HepG2 (cell line): ENCODE measurements at regions of chr4 and their contacts with region 1.

Region 1: GRCh38 chr4:1351854-1352633 is 5.0 kb downstream of the UVSSA start:
- DNase-seq: peak; percentile 52
- ATAC-seq: peak; percentile 60
- H3K4me3 ChIP-seq: no peak overlapping the region
- H3K27ac ChIP-seq: no peak overlapping the region
- H3K4me1 ChIP-seq: peaks cover 20% of the 10 kb centered on the region
- H3K27me3 ChIP-seq: no peaks in the 10 kb centered on the region; a peak in 1 of 5 replicates
- CTCF ChIP-seq: peak; percentile 97
- EP300 ChIP-seq: no peak
- POLR2A ChIP-seq: no peak
- RAD21 ChIP-seq: peak; percentile 73

Region 2: GRCh38 chr4:1130316-1131186 is 221.5 kb before region 1 on chr4:
- CTCF ChIA-PET with region 1: interaction called, 5 read pairs
- POLR2A ChIA-PET with region 1: no interaction called
- in situ Hi-C with region 1: loop called (anchors 5 kb)
- intact Hi-C with region 1: loop called (anchors 2 kb)
- DNase-seq: peak; percentile 56
- ATAC-seq: peak; percentile 97
- H3K4me3 ChIP-seq: no peak overlapping the region
- H3K27ac ChIP-seq: no peak overlapping the region
- H3K4me1 ChIP-seq: no peaks in the 10 kb centered on the region
- H3K27me3 ChIP-seq: peaks cover 1 to 9% of the 10 kb centered on the region in 2 experiments; a peak in 1 of 5 replicates
- CTCF ChIP-seq: peak; percentile 99
- EP300 ChIP-seq: no peak
- POLR2A ChIP-seq: no peak
- RAD21 ChIP-seq: peak; percentile 90

Region 3: DNA sequence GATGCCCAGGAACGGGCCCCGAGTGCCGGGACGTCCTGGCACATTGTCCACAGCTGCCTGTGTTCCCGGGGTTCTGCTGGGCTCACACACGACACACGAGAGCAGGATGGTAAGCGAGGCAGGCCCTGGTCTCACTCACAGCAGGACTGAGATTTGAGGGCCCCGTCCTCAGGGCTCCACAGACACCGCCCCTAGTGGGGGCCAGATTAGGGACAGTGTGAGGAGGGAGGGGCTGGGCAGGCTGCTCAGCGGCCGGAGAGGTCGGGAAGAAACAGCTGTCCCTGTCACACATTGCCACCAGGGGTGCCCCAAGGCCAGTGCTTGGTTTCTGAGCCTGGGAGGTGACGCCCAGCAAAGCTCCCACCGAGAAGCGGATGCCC is 25.2 kb after region 1 on chr4:
- CTCF ChIA-PET with region 1: no interaction called
- POLR2A ChIA-PET with region 1: no interaction called
- in situ Hi-C with region 1: no loop called
- intact Hi-C with region 1: no loop called
- DNase-seq: no peak
- ATAC-seq: peak; percentile 27
- H3K4me3 ChIP-seq: no peak overlapping the region
- H3K27ac ChIP-seq: no peak overlapping the region
- H3K4me1 ChIP-seq: no peaks in the 10 kb centered on the region
- H3K27me3 ChIP-seq: no peaks in the 10 kb centered on the region
- CTCF ChIP-seq: no peak
- EP300 ChIP-seq: no peak
- POLR2A ChIP-seq: no peak
- RAD21 ChIP-seq: no peak

Region 4: DNA sequence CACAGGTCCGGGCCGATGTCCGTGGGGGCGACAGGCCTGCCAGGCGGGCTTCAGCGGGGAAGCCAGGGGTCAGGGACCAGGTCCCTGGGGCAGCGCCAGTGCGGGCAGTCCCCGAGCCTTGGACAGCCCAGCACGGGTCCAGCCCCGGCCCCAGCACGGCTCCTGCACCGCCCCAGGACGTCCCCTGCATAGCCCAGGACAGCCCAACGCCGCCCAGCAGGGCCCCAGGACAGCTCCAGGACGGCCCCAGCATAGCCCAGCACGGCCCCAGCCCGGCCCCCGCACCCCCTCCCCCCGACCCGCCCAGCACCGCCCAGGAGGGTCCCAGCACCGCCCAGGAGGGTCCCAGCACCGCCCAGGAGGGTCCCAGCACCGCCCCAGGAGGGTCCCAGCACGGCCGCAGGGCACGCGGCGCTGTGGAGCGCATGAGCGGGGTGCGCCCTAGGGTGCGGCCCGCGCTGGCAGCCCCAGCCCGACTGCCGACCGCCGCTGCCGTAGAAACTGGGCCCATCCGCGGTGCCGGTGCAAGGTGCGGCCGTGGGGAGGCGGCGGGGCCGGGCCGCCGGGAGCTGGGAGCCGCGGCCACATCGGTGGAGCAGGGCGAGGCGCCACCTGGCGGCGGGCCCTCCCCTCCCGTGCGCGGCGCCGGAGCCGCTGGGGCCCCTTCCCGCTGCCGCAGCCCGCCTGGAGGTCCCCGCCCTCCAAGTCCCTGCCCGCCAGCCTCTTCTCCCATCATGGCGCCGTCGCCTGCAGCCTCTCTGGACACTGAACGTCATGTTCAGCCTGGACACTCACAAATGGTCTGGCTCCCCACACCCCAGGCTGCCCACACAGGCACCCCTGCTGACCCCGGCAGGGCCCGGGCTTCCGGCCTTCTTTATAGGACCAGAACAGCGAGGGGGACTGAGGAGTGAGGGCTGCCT is 161.0 kb after region 1 on chr4:
- CTCF ChIA-PET with region 1: interaction called, 10 read pairs
- POLR2A ChIA-PET with region 1: no interaction called
- in situ Hi-C with region 1: loop called (anchors 10 kb)
- intact Hi-C with region 1: loop called (anchors 5 kb)
- DNase-seq: peak; percentile 16
- ATAC-seq: peak; percentile 90
- H3K4me3 ChIP-seq: peak overlapping the region in 2 of 3 experiments; percentile 14 to 46; a peak in 2 of 6 replicates
- H3K27ac ChIP-seq: no peak overlapping the region
- H3K4me1 ChIP-seq: no peaks in the 10 kb centered on the region
- H3K27me3 ChIP-seq: peaks cover 9 to 31% of the 10 kb centered on the region in 2 experiments; a peak in 3 of 5 replicates
- CTCF ChIP-seq: peak; percentile 62
- EP300 ChIP-seq: no peak
- POLR2A ChIP-seq: no peak
- RAD21 ChIP-seq: peak; percentile 92

Region 5: GRCh38 chr4:1628892-1629698 is 277.1 kb after region 1 on chr4:
- CTCF ChIA-PET with region 1: interaction called, 3 read pairs
- POLR2A ChIA-PET with region 1: no interaction called
- in situ Hi-C with region 1: loop called (anchors 5 kb)
- intact Hi-C with region 1: no loop called
- DNase-seq: peak; percentile 30
- ATAC-seq: peak; percentile 84
- H3K4me3 ChIP-seq: no peak overlapping the region
- H3K27ac ChIP-seq: no peak overlapping the region
- H3K4me1 ChIP-seq: peaks cover 19% of the 10 kb centered on the region
- H3K27me3 ChIP-seq: peaks cover 0 to 30% of the 10 kb centered on the region in 2 experiments; a peak in 3 of 5 replicates
- CTCF ChIP-seq: peak; percentile 95
- EP300 ChIP-seq: no peak
- POLR2A ChIP-seq: no peak
- RAD21 ChIP-seq: peak; percentile 83